Naive thymus-derived CD4-positive, alpha-beta T cell (primary cell): ENCODE measurements at regions of chrX and their contacts with region 1.

Region 1: GRCh38 chrX:78333521-78333920 is 6.1 kb upstream of the CYSLTR1 start:
- DNase-seq: peak in 7 of 9 donors; percentile 33 to 77 (median 55)
- ATAC-seq: peak; percentile 88
- H3K4me3 ChIP-seq: no peak overlapping the region
- H3K4me3 Mint-ChIP-seq: peak overlapping the region in 9 of 10 donors; percentile 3 to 70 (median 19)
- H3K27ac ChIP-seq: peak overlapping the region; percentile 75
- H3K27ac Mint-ChIP-seq: peak overlapping the region; percentile 60 to 99 (median 89)
- H3K4me1 ChIP-seq: peaks cover 9 to 38% of the 10 kb centered on the region in 2 donors
- H3K4me1 Mint-ChIP-seq: peaks cover 22 to 86% (median 67%) of the 10 kb centered on the region in 7 donors
- H3K27me3 ChIP-seq: no peaks in the 10 kb centered on the region
- H3K27me3 Mint-ChIP-seq: no peaks in the 10 kb centered on the region

Region 2: DNA sequence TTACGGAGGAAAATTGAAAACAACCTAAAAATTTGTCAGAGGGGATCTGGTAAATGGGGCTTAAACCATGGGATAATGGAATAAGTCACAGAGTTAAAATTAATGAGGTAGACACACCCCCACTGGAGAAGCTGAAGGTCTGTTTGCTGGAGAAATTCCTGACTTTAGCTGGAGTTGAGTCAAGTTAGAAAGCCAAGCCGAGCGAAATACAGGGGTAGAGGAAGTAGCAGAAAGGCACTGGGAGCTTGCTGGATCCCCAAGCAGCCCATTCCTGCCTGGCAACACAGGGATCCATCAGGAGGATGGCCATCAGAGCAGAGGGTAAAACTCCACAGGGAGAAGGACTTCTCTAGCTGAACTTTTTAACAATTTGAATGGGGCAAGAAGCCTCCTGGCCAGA is 711.3 kb before region 1 on chrX:
- CTCF ChIA-PET with region 1: no interaction called
- POLR2A ChIA-PET with region 1: no interaction called
- intact Hi-C with region 1: no loop called
- DNase-seq: no peak
- ATAC-seq: no peak
- H3K4me3 ChIP-seq: no peak overlapping the region
- H3K4me3 Mint-ChIP-seq: no peak overlapping the region
- H3K27ac ChIP-seq: no peak overlapping the region
- H3K27ac Mint-ChIP-seq: peak overlapping the region in 2 of 9 donors; percentile 13 to 76
- H3K4me1 ChIP-seq: no peaks in the 10 kb centered on the region
- H3K4me1 Mint-ChIP-seq: peaks cover 5 to 21% (median 13%) of the 10 kb centered on the region in 7 donors
- H3K27me3 ChIP-seq: no peaks in the 10 kb centered on the region
- H3K27me3 Mint-ChIP-seq: no peaks in the 10 kb centered on the region

Region 3: DNA sequence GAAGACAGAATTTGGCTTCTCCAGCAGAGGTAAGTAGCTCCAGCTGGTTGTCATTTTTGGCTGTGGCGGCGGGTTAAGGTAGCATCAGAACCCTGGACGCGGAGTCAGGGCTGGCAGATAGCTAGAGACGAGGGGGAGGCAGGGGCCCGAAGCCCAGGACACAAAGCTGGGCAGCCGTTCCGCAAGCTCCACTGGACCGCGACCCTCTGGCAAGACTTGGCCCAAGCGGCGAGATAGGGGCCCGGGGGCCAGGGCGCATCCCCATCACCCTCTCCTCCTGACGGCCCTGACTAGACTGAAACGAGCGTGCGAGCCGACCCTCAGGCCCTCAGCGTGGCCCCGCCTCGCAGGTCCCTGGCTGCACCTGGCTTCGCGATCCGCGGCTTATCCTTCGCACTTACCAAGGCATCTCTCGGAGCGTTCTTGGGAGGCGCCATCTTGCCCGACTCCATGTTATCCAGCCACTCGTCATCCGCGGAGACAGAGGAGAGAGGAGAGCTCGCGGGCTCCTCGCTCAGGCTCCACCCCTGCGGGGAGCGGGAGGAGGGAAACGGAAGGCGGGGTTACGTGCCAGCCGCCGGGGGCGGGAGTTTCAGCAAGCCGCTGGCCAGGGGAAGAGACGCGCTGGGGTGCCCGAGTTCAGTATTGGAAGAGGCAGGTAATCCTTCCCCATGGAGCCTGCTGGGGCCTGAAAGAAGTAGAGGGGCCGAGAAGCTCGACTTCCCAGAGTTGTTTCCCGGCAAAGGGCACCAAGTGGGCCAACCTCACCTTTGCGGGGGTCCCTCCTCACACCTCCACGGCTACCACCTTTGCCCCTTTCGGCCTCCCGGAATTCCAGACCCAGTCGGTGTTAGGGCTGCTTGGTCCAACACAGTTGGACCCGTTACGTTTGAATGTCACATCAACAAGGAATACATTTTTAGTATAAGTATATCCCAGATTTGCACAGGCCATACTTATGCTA is 194.1 kb before region 1 on chrX and contains the start of gene TAF9B:
- CTCF ChIA-PET with region 1: no interaction called
- POLR2A ChIA-PET with region 1: no interaction called
- intact Hi-C with region 1: loop called (anchors 2 kb)
- DNase-seq: peak; percentile 57 to 84 (median 80)
- ATAC-seq: peak; percentile 99
- H3K4me3 ChIP-seq: peak within 1 kb of the TSS; percentile 77
- H3K4me3 Mint-ChIP-seq: peak within 1 kb of the TSS; percentile 88 to 95 (median 92)
- H3K27ac ChIP-seq: peak within 1 kb of the TSS; percentile 82
- H3K27ac Mint-ChIP-seq: peak within 1 kb of the TSS; percentile 81 to 95 (median 93)
- H3K4me1 ChIP-seq: no peaks in the 10 kb centered on the region
- H3K4me1 Mint-ChIP-seq: peaks cover 0 to 11% (median 5%) of the 10 kb centered on the region in 7 donors
- H3K27me3 ChIP-seq: no peaks in the 10 kb centered on the region
- H3K27me3 Mint-ChIP-seq: no peaks in the 10 kb centered on the region
- total RNA-seq, gene TAF9B: 10.4 to 19.9 (median 18.9) TPM

Region 4: GRCh38 chrX:78321809-78322208 is 11.7 kb before region 1 on chrX:
- CTCF ChIA-PET with region 1: no interaction called
- POLR2A ChIA-PET with region 1: interaction called, 11 read pairs
- intact Hi-C with region 1: loop called (anchors 1 kb)
- DNase-seq: peak in 7 of 9 donors; percentile 57 to 80 (median 72)
- ATAC-seq: peak; percentile 91
- H3K4me3 ChIP-seq: no peak overlapping the region
- H3K4me3 Mint-ChIP-seq: peak overlapping the region; percentile 66 to 95 (median 75)
- H3K27ac ChIP-seq: peak overlapping the region; percentile 55
- H3K27ac Mint-ChIP-seq: peak overlapping the region; percentile 80 to 99 (median 91)
- H3K4me1 ChIP-seq: peaks cover 16 to 23% of the 10 kb centered on the region in 2 donors
- H3K4me1 Mint-ChIP-seq: peaks cover 16 to 57% (median 45%) of the 10 kb centered on the region in 7 donors
- H3K27me3 ChIP-seq: no peaks in the 10 kb centered on the region
- H3K27me3 Mint-ChIP-seq: no peaks in the 10 kb centered on the region

Region 5: GRCh38 chrX:78375894-78376293 is 42.4 kb after region 1 on chrX:
- CTCF ChIA-PET with region 1: no interaction called
- POLR2A ChIA-PET with region 1: interaction called, 7 read pairs
- intact Hi-C with region 1: loop called (anchors 2 to 5 kb)
- DNase-seq: peak in 3 of 9 donors; percentile 1 to 12 (median 2)
- ATAC-seq: peak; percentile 14
- H3K4me3 ChIP-seq: no peak overlapping the region
- H3K4me3 Mint-ChIP-seq: no peak overlapping the region
- H3K27ac ChIP-seq: no peak overlapping the region
- H3K27ac Mint-ChIP-seq: peak overlapping the region in 4 of 9 donors; percentile 2 to 66 (median 42)
- H3K4me1 ChIP-seq: no peaks in the 10 kb centered on the region
- H3K4me1 Mint-ChIP-seq: peaks cover 7 to 29% (median 14%) of the 10 kb centered on the region in 7 donors
- H3K27me3 ChIP-seq: no peaks in the 10 kb centered on the region
- H3K27me3 Mint-ChIP-seq: no peaks in the 10 kb centered on the region

Region 6: GRCh38 chrX:78653118-78653822 is 319.7 kb after region 1 on chrX:
- CTCF ChIA-PET with region 1: no interaction called
- POLR2A ChIA-PET with region 1: no interaction called
- intact Hi-C with region 1: loop called in 1 of 2 experiments (anchors 10 kb)
- DNase-seq: no peak
- ATAC-seq: peak; percentile 57
- H3K4me3 ChIP-seq: no peak overlapping the region
- H3K4me3 Mint-ChIP-seq: peak overlapping the region in 1 of 10 donors; percentile 74
- H3K27ac ChIP-seq: no peak overlapping the region
- H3K27ac Mint-ChIP-seq: peak overlapping the region in 1 of 9 donors; percentile 53
- H3K4me1 ChIP-seq: peaks cover 12 to 13% of the 10 kb centered on the region in 2 donors
- H3K4me1 Mint-ChIP-seq: peaks cover 11 to 35% (median 23%) of the 10 kb centered on the region in 7 donors
- H3K27me3 ChIP-seq: no peaks in the 10 kb centered on the region
- H3K27me3 Mint-ChIP-seq: no peaks in the 10 kb centered on the region